ENCODE measurements at regions of chr2 and their contacts with region 1.

Region 1: GRCh38 chr2:237563816-237564215 is 2.6 kb upstream of the PRLH start:
- DNase-seq: peak; percentile 22 to 45 (median 40)
- ATAC-seq: no peak
- H3K4me3 ChIP-seq: no peak overlapping the region
- H3K27ac ChIP-seq: no peak overlapping the region
- H3K4me1 ChIP-seq: no peaks in the 10 kb centered on the region
- H3K27me3 ChIP-seq: no peaks in the 10 kb centered on the region
- CTCF ChIP-seq: no peak
- POLR2A ChIP-seq: no peak

Region 2: GRCh38 chr2:237421542-237422116 is 142.2 kb before region 1 on chr2:
- intact Hi-C with region 1: loop called (anchors 10 kb)
- DNase-seq: peak; percentile 67 to 74 (median 71)
- ATAC-seq: peak; percentile 80
- H3K4me3 ChIP-seq: no peak overlapping the region
- H3K27ac ChIP-seq: no peak overlapping the region
- H3K4me1 ChIP-seq: peaks cover 7% of the 10 kb centered on the region
- H3K27me3 ChIP-seq: no peaks in the 10 kb centered on the region
- CTCF ChIP-seq: peak; percentile 63 to 72 (median 67)
- POLR2A ChIP-seq: no peak

Region 3: DNA sequence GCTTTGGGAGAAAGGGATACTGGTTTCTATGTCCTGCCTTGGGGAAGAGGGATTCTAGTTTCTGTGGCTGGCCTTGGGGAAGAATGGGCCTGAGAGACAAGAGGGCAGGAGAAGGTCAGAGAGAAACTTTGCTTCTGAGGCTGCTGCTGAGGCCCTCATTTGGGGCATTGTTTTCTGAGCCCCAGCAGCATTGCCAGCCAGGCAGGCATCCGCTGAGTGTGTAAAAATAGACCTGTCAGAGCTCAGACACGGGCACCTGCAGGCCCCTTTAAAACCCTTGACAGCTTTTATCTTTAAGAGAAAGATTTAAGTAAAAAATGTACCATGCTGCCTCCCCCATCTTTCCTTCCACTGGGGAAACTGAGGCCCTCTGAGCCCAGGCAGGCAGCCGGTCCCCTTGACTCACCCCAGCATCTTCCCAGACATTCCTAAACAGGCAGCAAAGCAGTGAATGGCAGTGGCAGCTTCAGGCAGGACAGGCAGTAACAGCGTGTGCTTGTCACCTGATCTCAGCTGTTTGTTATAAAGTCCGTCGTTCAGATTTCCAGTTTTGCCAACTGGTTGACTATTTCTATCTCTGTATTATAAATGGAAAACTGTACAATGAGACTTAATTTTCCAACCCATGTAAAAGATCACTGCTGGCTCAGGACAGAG is 49.2 kb before region 1 on chr2:
- intact Hi-C with region 1: loop called (anchors 5 kb)
- DNase-seq: no peak
- ATAC-seq: no peak
- H3K4me3 ChIP-seq: no peak overlapping the region
- H3K27ac ChIP-seq: no peak overlapping the region
- H3K4me1 ChIP-seq: peaks cover 27% of the 10 kb centered on the region
- H3K27me3 ChIP-seq: no peaks in the 10 kb centered on the region
- CTCF ChIP-seq: no peak
- POLR2A ChIP-seq: no peak